GM10248 (cell line): ENCODE measurements at regions of chr22 and their contacts with region 1.

Region 1: DNA sequence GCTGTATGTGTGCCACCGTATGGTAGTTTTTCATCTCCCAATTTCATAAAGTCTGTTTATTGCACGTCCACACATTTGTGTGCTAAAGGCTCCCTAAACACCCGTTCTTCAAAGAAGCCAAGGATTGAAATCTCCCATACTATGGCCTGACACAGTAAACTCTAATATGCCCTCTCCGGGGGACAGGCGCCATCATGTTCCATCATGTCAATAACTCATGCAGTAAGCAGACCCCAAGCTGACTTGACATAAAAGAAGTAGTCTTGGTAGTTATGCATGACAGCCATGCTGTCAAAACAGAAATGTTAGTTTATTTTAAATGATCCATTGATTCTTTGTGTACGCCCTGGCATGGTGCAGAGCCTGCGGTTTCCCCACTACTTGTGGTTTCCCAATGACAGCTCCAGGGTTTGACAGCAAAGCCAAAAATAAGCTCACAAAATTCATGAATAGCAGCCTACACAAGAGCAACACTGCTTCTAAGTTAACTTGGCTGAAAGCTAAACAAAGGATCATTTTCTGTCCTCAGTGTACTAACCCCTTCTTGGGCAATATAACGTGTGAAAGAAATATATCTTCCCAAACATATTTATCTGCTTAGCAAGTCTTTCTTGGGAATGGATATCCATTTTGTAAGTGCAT is 56.5 kb upstream of the CABP7 start:
- DNase-seq: no peak
- CTCF ChIP-seq: no peak

Region 2: GRCh38 chr22:29625090-29625825 is 38.0 kb before region 1 on chr22:
- CTCF ChIA-PET with region 1: interaction called, 15 read pairs
- POLR2A ChIA-PET with region 1: no interaction called
- DNase-seq: peak; percentile 40
- CTCF ChIP-seq: peak; percentile 81